ENCODE measurements at regions of chr22 and their contacts with region 1.

Region 1: GRCh38 chr22:46328782-46329181 is 6.7 kb upstream of the TRMU start:
- DNase-seq: peak in 1 of 3 donors; percentile 27
- ATAC-seq: no peak
- H3K4me3 ChIP-seq: no peak overlapping the region
- H3K27ac ChIP-seq: no peak overlapping the region
- H3K4me1 ChIP-seq: no peaks in the 10 kb centered on the region
- H3K27me3 ChIP-seq: no peaks in the 10 kb centered on the region
- CTCF ChIP-seq: no peak
- POLR2A ChIP-seq: no peak

Region 2: DNA sequence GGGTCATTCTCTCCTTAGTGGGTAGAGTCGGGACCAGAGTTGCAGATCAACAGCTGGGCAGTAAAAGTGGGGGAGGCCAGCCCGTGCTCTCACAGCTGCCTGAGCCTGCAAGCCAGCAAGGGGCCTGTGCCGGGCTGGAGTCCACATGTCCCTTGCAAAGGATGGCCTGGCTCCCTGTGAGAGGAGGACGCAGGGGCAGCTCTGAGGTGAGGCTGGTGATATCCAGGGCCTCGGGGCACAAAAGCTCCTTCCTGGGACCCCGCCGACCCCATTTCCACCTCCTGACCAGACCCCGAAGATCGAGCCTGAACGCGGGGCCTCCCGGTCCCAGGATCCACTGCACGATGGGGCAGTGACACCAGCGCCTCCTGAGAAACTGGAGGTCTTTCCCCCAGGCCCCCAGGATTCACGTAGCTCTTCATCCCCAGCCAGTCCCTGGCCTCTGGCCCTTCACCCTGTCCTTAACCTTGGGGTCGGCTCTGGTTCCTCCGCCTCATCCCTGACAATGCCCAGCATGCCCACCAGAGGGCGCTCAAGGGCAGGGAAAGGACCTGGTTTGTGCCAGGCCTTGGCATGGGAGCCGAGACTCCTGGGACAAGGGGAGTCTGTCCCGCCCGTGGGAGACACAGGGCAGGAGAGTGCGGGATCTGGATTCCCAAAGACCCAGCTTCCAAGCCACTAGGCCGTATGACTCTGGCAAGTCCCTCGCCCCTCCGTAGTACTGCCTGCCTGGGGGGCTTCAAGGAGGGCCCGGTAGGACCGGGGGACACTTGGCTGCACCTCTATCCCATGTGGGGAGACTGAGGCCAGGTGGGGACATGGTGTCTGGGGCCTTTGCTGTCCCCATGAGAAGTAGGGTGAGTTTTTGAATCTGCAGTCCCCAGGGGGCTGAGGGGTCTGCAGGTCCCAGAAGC is 334.0 kb before region 1 on chr22:
- intact Hi-C with region 1: loop called in 1 of 2 experiments (anchors 10 kb)
- DNase-seq: peak; percentile 82 to 87 (median 87)
- ATAC-seq: peak; percentile 56 to 75 (median 64)
- H3K4me3 ChIP-seq: no peak overlapping the region
- H3K27ac ChIP-seq: no peak overlapping the region
- H3K4me1 ChIP-seq: peaks cover 0 to 13% (median 4%) of the 10 kb centered on the region in 4 donors
- H3K27me3 ChIP-seq: no peaks in the 10 kb centered on the region
- CTCF ChIP-seq: peak; percentile 97 to 98 (median 97)
- POLR2A ChIP-seq: no peak